SK-N-SH (cell line): ENCODE measurements at regions of chr4 and their contacts with region 1.

Region 1: GRCh38 chr4:174764105-174764729 is 64.8 kb downstream of the GLRA3 start:
- DNase-seq: peak; percentile 45
- H3K4me3 ChIP-seq: no peak overlapping the region; a peak in 1 of 4 replicates
- H3K27ac ChIP-seq: no peak overlapping the region
- H3K4me1 ChIP-seq: no peaks in the 10 kb centered on the region
- H3K27me3 ChIP-seq: no peaks in the 10 kb centered on the region
- CTCF ChIP-seq: peak; percentile 83
- EP300 ChIP-seq: no peak
- RAD21 ChIP-seq: peak; percentile 70

Region 2: DNA sequence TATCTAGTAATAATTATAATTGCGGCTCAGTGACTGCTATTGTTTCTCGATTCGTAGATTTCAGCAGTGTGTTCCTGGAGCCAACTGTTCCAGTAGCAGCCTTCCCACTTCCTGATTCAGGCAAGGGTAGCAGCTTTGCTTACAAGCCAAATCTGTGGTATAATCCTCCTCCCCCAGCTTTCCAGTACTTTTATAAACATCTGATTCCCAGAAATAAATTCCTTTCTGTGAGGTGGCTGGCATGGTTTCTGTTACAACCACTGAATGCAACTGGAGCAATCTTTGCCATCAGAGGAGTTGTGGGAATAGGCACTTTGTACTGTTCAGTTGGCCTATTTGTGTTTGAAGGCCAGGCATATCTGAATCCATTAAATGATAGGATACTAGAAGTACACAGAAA is 15.1 kb before region 1 on chr4:
- CTCF ChIA-PET with region 1: interaction called, 20 read pairs
- POLR2A ChIA-PET with region 1: no interaction called
- DNase-seq: no peak
- H3K4me3 ChIP-seq: no peak overlapping the region
- H3K27ac ChIP-seq: no peak overlapping the region
- H3K4me1 ChIP-seq: no peaks in the 10 kb centered on the region
- H3K27me3 ChIP-seq: no peaks in the 10 kb centered on the region
- CTCF ChIP-seq: no peak
- EP300 ChIP-seq: no peak
- RAD21 ChIP-seq: no peak

Region 3: DNA sequence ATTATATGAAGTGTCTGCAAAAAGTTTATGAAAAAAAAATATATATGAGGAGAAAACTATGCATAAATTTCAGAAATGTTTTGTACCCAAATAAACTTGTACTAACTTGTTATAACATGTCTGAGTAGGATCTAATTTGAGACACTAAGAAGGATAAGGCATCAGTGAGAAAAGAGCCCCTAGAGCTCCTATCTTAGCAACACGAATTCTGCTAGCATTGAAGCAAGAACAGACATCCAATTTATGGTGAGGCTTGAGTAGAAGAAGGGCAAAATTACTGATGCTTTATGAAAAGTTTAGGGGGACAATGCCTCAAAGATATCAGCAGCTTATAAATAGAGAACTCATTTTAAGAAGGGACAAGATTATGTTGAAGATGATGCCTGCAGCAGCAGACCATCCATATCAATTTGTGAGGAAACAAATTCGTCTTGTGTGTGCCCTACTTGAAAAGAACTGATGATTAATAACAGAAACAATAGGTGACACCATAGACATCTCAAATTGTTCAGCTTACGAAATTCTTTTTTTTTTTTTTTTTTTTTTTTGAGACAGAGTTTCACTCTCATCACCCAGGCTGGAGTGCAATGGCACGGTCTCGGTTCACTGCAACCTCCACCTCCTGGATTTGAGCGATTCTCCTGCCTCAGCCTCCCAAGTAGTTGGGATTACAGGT is 118.2 kb after region 1 on chr4:
- CTCF ChIA-PET with region 1: no interaction called
- POLR2A ChIA-PET with region 1: no interaction called
- DNase-seq: no peak
- H3K4me3 ChIP-seq: no peak overlapping the region
- H3K27ac ChIP-seq: no peak overlapping the region
- H3K4me1 ChIP-seq: no peaks in the 10 kb centered on the region
- H3K27me3 ChIP-seq: no peaks in the 10 kb centered on the region
- CTCF ChIP-seq: no peak
- EP300 ChIP-seq: no peak
- RAD21 ChIP-seq: no peak

Region 4: GRCh38 chr4:174933083-174933482 is 168.9 kb after region 1 on chr4:
- CTCF ChIA-PET with region 1: no interaction called
- POLR2A ChIA-PET with region 1: no interaction called
- DNase-seq: no peak
- H3K4me3 ChIP-seq: no peak overlapping the region
- H3K27ac ChIP-seq: no peak overlapping the region
- H3K4me1 ChIP-seq: no peaks in the 10 kb centered on the region
- H3K27me3 ChIP-seq: no peaks in the 10 kb centered on the region
- CTCF ChIP-seq: no peak
- EP300 ChIP-seq: no peak
- RAD21 ChIP-seq: no peak

Region 5: GRCh38 chr4:175536852-175537453 is 772.7 kb after region 1 on chr4:
- CTCF ChIA-PET with region 1: interaction called, 40 read pairs
- POLR2A ChIA-PET with region 1: no interaction called
- DNase-seq: peak; percentile 25
- H3K4me3 ChIP-seq: no peak overlapping the region
- H3K27ac ChIP-seq: no peak overlapping the region
- H3K4me1 ChIP-seq: no peaks in the 10 kb centered on the region
- H3K27me3 ChIP-seq: no peaks in the 10 kb centered on the region
- CTCF ChIP-seq: peak; percentile 72
- EP300 ChIP-seq: no peak
- RAD21 ChIP-seq: peak; percentile 78